ENCODE measurements at regions of chr10 and their contacts with region 1.

Region 1: GRCh38 chr10:14536241-14537213 is 205.8 kb upstream of the FRMD4A start:
- DNase-seq: peak in 1 of 5 donors; percentile 30
- H3K4me3 ChIP-seq: no peak overlapping the region
- H3K4me3 Mint-ChIP-seq: peak overlapping the region in 1 of 8 donors; percentile 15
- H3K27ac ChIP-seq: peak overlapping the region; percentile 27
- H3K27ac Mint-ChIP-seq: peak overlapping the region; percentile 15 to 94 (median 83)
- H3K4me1 ChIP-seq: peaks cover 91% of the 10 kb centered on the region
- H3K4me1 Mint-ChIP-seq: peaks cover 71 to 100% (median 87%) of the 10 kb centered on the region in 4 donors
- H3K27me3 ChIP-seq: no peaks in the 10 kb centered on the region
- H3K27me3 Mint-ChIP-seq: no peaks in the 10 kb centered on the region

Region 2: DNA sequence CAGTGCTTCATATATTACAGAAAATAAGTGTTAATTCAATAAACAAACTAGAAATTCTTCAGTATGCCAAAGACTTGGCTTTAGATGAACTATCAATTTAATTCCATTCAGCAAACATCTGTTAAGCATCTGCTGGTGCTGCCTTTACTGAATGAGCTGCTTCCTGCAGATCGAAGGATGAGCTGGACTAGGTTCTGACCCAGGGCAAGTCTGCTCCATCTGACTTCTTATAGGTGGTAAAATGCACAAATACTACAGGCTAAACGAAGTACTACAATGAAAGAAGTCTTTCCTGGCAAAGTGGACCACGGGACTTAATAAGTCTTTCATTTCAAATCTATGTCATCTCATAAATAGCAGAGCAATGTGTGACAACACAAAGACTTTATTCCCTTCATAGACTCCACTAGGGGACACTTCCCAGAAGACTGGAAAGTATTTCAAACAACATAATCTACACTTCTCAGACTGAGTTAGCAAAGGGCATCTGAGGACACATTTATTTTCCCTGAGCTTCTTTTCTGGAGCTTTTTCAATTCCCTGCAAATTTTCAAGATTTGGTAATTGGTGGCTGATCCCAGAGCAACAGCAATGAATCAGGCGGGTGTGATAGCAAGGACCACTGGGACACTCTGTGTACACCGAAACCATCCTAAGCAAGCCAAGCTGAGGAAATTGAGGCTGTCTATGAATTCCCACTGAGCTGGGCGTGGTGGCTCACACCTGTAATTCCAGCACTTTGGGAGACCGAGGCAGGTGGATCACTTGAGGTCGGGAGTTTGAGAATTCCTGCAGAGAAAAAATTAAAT is 96.9 kb before region 1 on chr10:
- CTCF ChIA-PET with region 1: no interaction called
- POLR2A ChIA-PET with region 1: no interaction called
- intact Hi-C with region 1: no loop called
- DNase-seq: no peak
- H3K4me3 ChIP-seq: no peak overlapping the region
- H3K4me3 Mint-ChIP-seq: no peak overlapping the region
- H3K27ac ChIP-seq: no peak overlapping the region
- H3K27ac Mint-ChIP-seq: no peak overlapping the region
- H3K4me1 ChIP-seq: no peaks in the 10 kb centered on the region
- H3K4me1 Mint-ChIP-seq: no peaks in the 10 kb centered on the region
- H3K27me3 ChIP-seq: no peaks in the 10 kb centered on the region
- H3K27me3 Mint-ChIP-seq: peaks cover 8 to 9% of the 10 kb centered on the region in 2 donors

Region 3: DNA sequence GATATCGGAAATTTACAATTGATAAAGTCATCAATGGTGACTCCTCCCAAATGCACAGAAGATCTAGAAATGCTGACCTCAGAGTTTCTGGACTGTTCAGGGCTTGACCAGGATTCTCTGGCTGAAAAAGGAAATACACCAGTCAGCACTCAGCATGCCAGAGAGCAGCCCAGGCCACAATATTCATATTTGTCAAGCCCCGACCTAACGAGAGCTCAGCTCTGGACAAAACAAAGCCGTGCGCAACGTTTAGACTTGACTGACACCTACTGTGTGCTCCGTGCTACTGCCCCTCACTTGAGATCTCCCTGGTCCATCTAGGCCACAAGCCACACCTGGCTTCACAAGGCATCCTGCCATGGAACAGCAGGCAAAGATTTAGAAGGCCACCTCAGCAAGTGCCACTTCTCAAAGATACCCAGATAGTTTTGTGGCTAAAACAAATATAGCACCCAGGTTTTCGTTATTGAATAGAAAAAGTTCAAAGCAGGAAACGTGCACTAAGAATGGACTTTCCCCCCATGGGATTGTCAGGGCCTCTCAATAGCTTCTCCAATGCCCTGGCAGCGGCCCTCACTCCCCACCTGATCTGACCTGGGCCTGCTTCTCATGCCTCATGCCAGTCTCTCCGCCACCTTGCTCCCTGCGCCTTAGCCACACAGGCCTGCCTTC is 19.9 kb after region 1 on chr10:
- CTCF ChIA-PET with region 1: interaction called, 49 read pairs
- POLR2A ChIA-PET with region 1: interaction called, 7 read pairs
- intact Hi-C with region 1: no loop called
- DNase-seq: peak in 4 of 5 donors; percentile 34 to 64 (median 47)
- H3K4me3 ChIP-seq: no peak overlapping the region
- H3K4me3 Mint-ChIP-seq: peak overlapping the region; percentile 53 to 87 (median 75)
- H3K27ac ChIP-seq: peak overlapping the region; percentile 65
- H3K27ac Mint-ChIP-seq: peak overlapping the region; percentile 93 to 97 (median 94)
- H3K4me1 ChIP-seq: peaks cover 100% of the 10 kb centered on the region
- H3K4me1 Mint-ChIP-seq: peaks cover 80 to 99% (median 89%) of the 10 kb centered on the region in 4 donors
- H3K27me3 ChIP-seq: no peaks in the 10 kb centered on the region
- H3K27me3 Mint-ChIP-seq: no peaks in the 10 kb centered on the region